ENCODE measurements at regions of chr1 and their contacts with region 1.

Region 1: GRCh38 chr1:84690397-84691121 is at the start of gene SSX2IP:
- DNase-seq: peak; percentile 98 to 100 (median 99)
- H3K4me3 ChIP-seq: peak within 1 kb of the TSS; percentile 28 to 79
- H3K4me3 Mint-ChIP-seq: peak within 1 kb of the TSS; percentile 87 to 96 (median 92)
- H3K27ac ChIP-seq: peak within 1 kb of the TSS; percentile 87
- H3K27ac Mint-ChIP-seq: peak within 1 kb of the TSS; percentile 90 to 99 (median 97)
- H3K4me1 ChIP-seq: peaks cover 37% of the 10 kb centered on the region
- H3K4me1 Mint-ChIP-seq: peaks cover 45 to 69% (median 45%) of the 10 kb centered on the region in 4 donors
- H3K27me3 ChIP-seq: no peaks in the 10 kb centered on the region
- H3K27me3 Mint-ChIP-seq: no peaks in the 10 kb centered on the region
- total RNA-seq, gene SSX2IP: 7.5 to 8.3 TPM

Region 2: GRCh38 chr1:84433258-84434080 is 257.1 kb before region 1 on chr1:
- CTCF ChIA-PET with region 1: interaction called, 3 read pairs
- POLR2A ChIA-PET with region 1: interaction called, 3 read pairs
- intact Hi-C with region 1: loop called (anchors 1 kb)
- DNase-seq: peak; percentile 67 to 83 (median 81)
- H3K4me3 ChIP-seq: peak overlapping the region in 1 of 2 donors; percentile 20
- H3K4me3 Mint-ChIP-seq: peak overlapping the region; percentile 65 to 82 (median 76)
- H3K27ac ChIP-seq: peak overlapping the region; percentile 54
- H3K27ac Mint-ChIP-seq: peak overlapping the region in 1 of 7 donors; percentile 88
- H3K4me1 ChIP-seq: peaks cover 36% of the 10 kb centered on the region
- H3K4me1 Mint-ChIP-seq: peaks cover 8 to 15% (median 12%) of the 10 kb centered on the region in 4 donors
- H3K27me3 ChIP-seq: no peaks in the 10 kb centered on the region
- H3K27me3 Mint-ChIP-seq: no peaks in the 10 kb centered on the region

Region 3: GRCh38 chr1:84506002-84506728 is 184.4 kb before region 1 on chr1 and contains the starts of genes GNG5 and SPATA1:
- CTCF ChIA-PET with region 1: no interaction called
- POLR2A ChIA-PET with region 1: interaction called, 4 read pairs
- intact Hi-C with region 1: loop called (anchors 1 kb)
- DNase-seq: peak; percentile 94 to 97 (median 96)
- H3K4me3 ChIP-seq: peak within 1 kb of the TSS; percentile 68 to 87
- H3K4me3 Mint-ChIP-seq: peak within 1 kb of the TSS; percentile 92 to 99 (median 98)
- H3K27ac ChIP-seq: peak within 1 kb of the TSS; percentile 81
- H3K27ac Mint-ChIP-seq: peak within 1 kb of the TSS; percentile 93 to 99 (median 97)
- H3K4me1 ChIP-seq: peaks cover 47% of the 10 kb centered on the region
- H3K4me1 Mint-ChIP-seq: peaks cover 28 to 55% (median 34%) of the 10 kb centered on the region in 4 donors
- H3K27me3 ChIP-seq: no peaks in the 10 kb centered on the region
- H3K27me3 Mint-ChIP-seq: no peaks in the 10 kb centered on the region
- total RNA-seq, gene GNG5: 38.1 to 45.5 TPM
- total RNA-seq, gene SPATA1: 1.7 to 3.4 TPM

Region 4: GRCh38 chr1:84668185-84668584 is 22.4 kb before region 1 on chr1:
- CTCF ChIA-PET with region 1: interaction called, 8 read pairs
- POLR2A ChIA-PET with region 1: no interaction called
- intact Hi-C with region 1: loop called (anchors 2 kb)
- DNase-seq: no peak
- H3K4me3 ChIP-seq: no peak overlapping the region
- H3K4me3 Mint-ChIP-seq: no peak overlapping the region
- H3K27ac ChIP-seq: no peak overlapping the region
- H3K27ac Mint-ChIP-seq: no peak overlapping the region
- H3K4me1 ChIP-seq: no peaks in the 10 kb centered on the region
- H3K4me1 Mint-ChIP-seq: peaks cover 3 to 6% (median 5%) of the 10 kb centered on the region in 4 donors
- H3K27me3 ChIP-seq: no peaks in the 10 kb centered on the region
- H3K27me3 Mint-ChIP-seq: no peaks in the 10 kb centered on the region

Region 5: DNA sequence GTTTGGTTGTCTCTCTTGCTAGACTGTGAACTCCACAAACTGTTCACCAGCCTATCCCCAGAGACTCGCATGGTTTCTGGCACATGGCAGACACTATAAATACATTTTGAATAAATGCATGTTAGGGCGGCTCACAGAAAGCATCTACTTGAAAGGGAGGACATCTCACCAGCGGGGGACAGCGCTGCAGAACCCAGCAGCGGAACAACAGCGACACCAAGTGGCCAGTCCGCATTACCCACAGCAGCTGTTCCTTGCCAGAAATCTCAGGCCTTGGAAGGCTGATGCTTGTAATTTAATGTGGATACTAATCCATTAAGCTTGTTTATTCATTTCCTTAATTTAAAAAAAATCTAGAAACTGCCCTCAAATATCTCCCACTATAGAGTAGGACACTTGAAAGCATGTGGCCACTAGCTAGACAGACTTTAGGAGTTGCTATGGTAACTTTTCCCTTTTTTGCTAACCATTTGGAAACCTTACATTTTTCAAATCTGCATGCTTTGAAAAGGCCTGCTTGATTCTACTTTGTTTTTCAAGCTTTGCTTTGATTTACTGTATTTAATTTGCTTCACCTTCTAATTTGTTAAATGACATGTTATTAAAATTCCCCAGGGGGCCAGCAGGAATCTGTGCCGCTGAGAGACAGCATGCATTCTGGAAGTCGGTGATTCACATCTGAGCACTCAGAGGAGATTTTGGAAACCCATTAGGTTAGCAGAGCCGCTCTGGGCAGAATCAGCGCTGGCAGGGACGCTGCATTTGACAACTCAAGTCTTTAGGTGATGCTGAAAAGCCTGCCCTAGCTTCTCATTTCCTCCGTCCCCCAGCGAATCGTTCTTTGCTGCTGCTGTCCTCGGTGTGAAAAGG is 63.2 kb after region 1 on chr1:
- CTCF ChIA-PET with region 1: interaction called, 14 read pairs
- POLR2A ChIA-PET with region 1: no interaction called
- intact Hi-C with region 1: no loop called
- DNase-seq: peak; percentile 61 to 70 (median 65)
- H3K4me3 ChIP-seq: no peak overlapping the region
- H3K4me3 Mint-ChIP-seq: peak overlapping the region in 2 of 8 donors; percentile 0 to 17
- H3K27ac ChIP-seq: no peak overlapping the region
- H3K27ac Mint-ChIP-seq: peak overlapping the region in 1 of 7 donors; percentile 77
- H3K4me1 ChIP-seq: no peaks in the 10 kb centered on the region
- H3K4me1 Mint-ChIP-seq: peaks cover 0 to 8% (median 4%) of the 10 kb centered on the region in 4 donors
- H3K27me3 ChIP-seq: no peaks in the 10 kb centered on the region
- H3K27me3 Mint-ChIP-seq: peaks cover 12 to 26% of the 10 kb centered on the region in 2 donors

Region 6: DNA sequence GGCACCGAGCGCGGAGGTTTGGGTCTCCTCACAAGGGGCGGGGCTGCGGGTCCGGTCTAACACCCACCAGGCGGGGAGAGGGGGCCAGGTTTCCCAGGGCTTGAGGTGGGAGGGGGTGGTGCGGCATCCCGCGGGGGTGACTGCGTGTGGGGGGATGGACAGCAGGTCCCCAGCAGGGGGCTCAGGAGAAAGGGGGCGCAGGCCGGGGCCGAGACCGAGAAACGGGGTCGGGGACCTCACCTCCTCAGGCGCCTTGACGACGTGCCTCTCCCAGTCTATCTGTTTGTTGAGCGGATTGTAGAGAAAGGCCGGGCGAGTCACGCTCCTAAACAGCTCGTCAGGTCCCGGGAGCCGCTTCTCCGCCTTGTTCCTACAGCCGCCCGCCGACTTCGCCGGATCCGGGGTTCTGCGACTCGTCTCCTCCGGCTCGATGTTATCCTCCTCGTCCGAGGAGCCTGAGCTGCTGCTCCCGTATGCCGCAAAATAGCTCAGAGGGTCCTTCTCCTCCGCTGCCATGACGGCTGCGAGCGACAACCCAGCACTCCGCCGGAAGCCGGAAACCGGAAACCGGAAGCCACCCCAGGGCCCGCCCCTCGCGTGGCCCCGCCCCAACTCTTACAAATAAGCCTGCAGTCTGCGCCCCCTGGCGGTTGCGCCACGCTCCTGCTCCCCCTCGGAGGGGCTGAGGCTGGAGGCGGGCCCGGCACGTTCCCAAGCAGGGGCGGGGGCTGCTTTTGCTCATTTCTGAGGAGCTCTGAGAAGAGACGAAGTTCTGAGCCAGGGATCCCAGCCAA is 568.8 kb after region 1 on chr1 and contains the start of gene C1orf52:
- CTCF ChIA-PET with region 1: interaction called, 3 read pairs
- POLR2A ChIA-PET with region 1: no interaction called
- intact Hi-C with region 1: loop called (anchors 5 kb)
- DNase-seq: peak; percentile 93 to 96 (median 95)
- H3K4me3 ChIP-seq: peak within 1 kb of the TSS; percentile 85 to 95
- H3K4me3 Mint-ChIP-seq: peak within 1 kb of the TSS; percentile 98 to 99 (median 98)
- H3K27ac ChIP-seq: peak within 1 kb of the TSS; percentile 80
- H3K27ac Mint-ChIP-seq: peak within 1 kb of the TSS; percentile 94 to 98 (median 97)
- H3K4me1 ChIP-seq: peaks cover 35% of the 10 kb centered on the region
- H3K4me1 Mint-ChIP-seq: peaks cover 27 to 56% (median 41%) of the 10 kb centered on the region in 4 donors
- H3K27me3 ChIP-seq: no peaks in the 10 kb centered on the region
- H3K27me3 Mint-ChIP-seq: no peaks in the 10 kb centered on the region
- total RNA-seq, gene C1orf52: 39.6 to 41.6 TPM

Measured in CD4-positive, alpha-beta memory T cell (primary cell).